ENCODE measurements at regions of chr10 and their contacts with region 1.

Region 1: DNA sequence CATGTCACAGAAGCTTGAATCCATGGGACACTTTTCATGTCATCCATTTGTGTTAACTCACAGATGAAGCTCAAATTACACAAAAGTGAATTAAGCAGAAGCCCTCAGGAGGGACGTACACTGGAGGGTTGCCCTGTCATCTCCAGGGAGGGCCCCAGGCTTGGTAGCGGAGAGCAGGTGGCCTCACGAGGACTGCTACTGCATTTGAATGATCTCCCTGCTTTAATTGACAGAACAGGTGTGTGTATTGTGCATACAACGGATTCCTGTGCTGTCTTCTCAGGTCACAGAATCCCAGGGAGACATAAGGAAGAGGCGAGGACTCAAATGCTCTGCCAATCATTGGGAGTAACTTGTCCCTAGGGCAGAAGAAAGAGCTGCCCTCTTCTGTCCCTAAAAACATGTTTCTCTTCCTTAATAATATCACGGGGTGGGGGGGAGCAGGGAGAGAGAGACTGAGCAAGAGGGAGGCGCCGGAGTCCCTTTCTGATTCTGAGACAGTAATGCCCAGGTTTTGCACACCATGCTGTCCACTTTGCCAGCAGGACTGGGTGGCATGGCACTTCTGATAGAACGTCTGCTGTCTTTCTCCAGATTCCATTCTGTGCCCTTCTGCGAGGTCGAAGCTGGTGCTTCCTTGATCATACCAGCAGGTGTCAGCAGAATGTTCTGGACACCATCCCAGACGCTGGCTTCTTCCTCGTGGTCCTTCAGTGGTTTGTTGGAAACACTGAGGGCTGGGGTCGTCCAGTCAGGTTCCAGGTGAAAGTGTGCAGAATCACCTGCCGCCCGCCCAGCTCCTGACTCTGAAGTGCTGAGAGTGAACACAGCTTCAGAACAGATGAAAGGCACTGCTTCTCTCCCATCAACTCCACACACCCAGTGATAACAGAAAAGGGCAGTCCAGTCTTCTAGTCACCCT is 26.2 kb upstream of the RASGEF1A start:
- DNase-seq: no peak

Region 2: DNA sequence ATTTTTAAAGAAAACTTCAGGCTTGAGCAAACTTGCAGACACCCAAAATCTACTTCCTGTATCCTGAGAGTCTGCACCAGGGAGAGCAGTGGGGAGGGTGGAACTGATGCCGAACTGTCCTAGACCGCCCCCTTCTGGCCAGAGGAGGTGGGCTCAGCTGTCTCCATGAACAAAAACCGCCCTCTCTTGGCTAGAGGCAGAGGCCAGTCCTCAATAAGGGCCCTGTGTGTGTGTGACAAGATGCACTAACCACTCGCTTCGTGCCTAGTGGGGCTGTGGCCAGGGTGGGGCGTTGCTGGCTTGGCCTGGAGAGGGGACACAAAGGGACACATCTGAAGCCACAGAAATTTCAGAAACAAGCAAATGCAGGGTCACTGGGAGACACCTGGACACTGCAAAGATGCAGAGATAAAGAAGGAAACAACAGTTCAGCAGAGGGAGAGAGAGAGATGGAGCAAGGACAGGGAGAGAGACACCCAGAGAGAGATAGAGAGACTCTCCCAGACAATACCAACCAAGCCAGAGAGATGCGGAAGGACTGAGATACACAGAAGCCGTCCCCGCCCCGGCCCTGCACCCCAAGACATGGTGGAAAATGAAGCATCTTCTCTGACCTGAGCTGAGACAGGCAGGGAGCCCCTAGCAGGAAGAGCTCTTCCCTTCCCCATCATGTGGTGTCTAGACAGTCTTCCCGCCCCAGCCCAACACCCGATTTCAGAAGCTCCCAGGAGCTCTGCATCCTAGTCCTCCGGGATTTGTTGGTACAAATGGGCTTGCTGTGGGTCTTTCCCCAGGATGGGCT is 55.7 kb after region 1 on chr10:
- intact Hi-C with region 1: loop called in 1 of 2 experiments (anchors 10 kb)
- DNase-seq: peak; percentile 96

Region 3: DNA sequence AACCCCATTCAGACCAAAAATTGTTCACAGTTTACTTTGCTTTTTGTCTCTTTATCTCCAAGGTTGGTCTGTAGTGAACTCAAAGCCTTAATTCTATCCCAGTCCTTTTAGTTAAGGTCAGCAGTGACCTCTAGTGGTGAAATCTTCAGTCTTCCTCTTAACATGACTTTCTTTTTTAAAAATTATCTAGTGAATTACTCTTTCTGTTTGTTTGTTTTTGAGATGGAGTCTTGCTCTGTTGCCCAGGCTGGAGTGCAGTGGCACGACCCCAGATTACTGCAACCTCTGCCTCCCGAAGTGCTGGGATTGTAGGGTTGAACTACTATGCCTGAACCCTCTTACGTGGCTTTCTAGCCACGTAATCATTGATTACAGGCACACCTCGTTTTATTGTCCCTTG is 168.9 kb after region 1 on chr10:
- intact Hi-C with region 1: loop called in 1 of 2 experiments (anchors 2 kb)
- DNase-seq: no peak

Region 4: DNA sequence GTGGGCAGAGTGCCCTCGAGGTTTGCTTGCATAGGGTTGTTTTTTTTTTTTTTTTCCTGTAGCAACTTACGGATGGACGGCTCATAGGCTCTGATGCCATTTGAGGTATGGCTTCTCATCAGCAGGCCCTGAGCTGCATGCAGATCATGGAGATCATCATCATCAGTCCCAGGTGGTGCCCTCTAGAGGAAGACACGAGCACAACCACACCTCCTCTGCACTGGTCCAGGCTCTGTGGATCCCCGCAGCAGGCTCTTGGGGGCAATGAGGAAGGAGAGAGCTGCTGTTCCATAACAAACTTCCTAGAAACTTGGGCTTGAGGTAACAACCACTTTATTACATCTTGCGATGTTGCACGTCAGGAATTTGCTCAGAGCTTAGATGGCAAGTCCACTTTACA is 1224.6 kb after region 1 on chr10:
- intact Hi-C with region 1: no loop called
- DNase-seq: no peak